IMR-90 (cell line): ENCODE measurements at regions of chr6 and their contacts with region 1.

Region 1: DNA sequence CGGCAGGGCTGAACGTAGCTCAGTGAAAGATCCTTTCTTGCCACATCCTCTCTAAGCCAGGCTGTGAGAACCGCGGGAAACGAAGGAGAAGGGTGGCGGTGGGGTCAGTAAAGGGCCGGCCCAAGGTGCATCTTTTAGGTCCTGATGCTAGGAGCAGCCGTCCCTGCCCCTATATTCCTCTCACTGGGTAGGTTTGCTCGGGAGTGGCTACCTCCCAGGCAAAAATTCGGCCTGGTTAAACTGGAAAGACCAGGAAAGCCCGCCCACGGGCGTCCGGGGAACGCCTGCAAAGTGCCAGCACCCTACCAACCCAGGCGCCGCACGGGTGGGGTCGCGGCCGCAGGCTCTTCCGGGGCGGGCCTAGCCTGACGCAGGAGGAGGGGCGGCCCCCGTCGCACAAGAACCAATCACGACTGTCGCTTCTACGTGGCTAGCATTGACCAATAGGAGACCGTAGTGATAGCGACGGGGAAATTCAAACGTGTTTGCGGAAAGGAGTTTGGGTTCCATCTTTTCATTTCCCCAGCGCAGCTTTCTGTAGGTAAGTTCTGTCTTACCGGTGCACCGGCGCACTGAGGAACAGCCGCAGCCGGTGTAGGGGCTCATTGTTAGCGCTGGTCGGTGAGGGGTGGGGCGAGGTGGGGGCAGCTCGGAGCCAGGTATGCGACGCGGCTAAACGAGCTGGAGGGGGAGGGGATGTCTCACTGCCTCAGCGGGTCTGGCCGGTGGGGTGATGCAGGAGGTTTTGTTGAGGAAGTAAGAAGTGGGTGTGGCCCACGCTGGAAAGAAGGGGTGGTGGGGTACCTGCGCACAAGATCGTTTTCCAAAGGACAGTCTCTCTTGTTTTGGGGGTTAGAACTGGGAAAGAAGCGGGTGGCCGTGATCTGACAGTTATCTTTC is at the start of gene TTK:
- DNase-seq: peak; percentile 93
- ATAC-seq: peak; percentile 100
- H3K4me3 ChIP-seq: peak within 1 kb of the TSS; percentile 69
- H3K27ac ChIP-seq: peak within 1 kb of the TSS; percentile 74
- H3K4me1 ChIP-seq: no peaks in the 10 kb centered on the region
- H3K27me3 ChIP-seq: no peaks in the 10 kb centered on the region
- CTCF ChIP-seq: no peak
- POLR2A ChIP-seq: peak; percentile 56
- RAD21 ChIP-seq: no peak
- total RNA-seq, gene TTK: 21.5 and 35.3 TPM in 2 replicates

Region 2: DNA sequence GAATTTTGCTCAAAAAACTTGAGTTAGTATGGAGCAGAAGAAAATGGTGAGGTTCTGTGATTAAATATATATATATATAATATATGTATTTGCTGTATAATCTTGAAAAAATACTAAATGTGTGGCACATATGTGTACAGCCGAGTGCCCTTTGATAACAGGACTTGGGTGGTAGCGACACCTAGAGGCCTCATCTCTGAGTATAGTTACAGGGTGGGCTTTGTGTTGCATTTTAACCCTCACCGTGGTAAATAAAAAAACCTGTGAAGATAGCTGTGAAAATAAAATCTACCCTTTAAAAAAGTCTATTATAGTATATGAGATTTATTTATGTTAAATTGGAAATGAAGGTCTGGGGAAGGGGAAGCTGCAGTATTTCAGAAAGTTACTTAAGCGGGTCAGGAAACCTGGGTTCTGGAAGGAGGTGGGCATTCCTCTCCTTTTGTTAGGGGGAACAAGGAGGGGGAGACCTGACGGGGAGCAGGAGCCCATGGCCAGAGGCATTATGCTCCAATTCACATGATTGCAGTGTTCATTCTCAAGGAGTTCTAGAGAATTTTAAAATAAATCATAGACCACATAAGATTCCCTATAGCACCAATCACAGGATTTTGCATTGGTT is 290.6 kb before region 1 on chr6:
- CTCF ChIA-PET with region 1: no interaction called
- POLR2A ChIA-PET with region 1: no interaction called
- dilution Hi-C with region 1: no loop called
- in situ Hi-C with region 1: no loop called
- intact Hi-C with region 1: no loop called
- DNase-seq: peak; percentile 50
- ATAC-seq: peak; percentile 81
- H3K4me3 ChIP-seq: no peak overlapping the region
- H3K27ac ChIP-seq: no peak overlapping the region
- H3K4me1 ChIP-seq: no peaks in the 10 kb centered on the region
- H3K27me3 ChIP-seq: no peaks in the 10 kb centered on the region; the same call in 1 of the 2 replicates
- CTCF ChIP-seq: peak; percentile 65
- POLR2A ChIP-seq: no peak
- RAD21 ChIP-seq: peak; percentile 74

Region 3: DNA sequence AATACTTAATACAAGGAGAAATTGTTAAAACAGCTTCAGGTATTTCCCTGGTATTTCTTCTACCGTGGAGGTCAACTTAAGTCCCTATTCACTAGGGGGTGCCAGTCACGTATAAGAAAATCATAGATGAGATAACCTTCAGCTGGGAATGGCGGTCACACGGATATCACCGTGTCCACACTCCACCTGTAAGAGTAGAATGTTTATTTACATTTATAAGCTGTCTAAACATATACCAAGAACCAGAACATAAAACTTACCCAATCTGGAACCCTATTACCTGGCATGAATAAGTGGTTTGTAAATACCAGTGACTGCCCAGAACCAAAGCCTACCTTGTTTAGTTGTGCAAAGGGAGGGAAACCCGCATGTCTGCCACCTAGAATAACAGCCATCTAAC is 55.2 kb before region 1 on chr6:
- CTCF ChIA-PET with region 1: interaction called, 5 read pairs
- POLR2A ChIA-PET with region 1: no interaction called
- dilution Hi-C with region 1: no loop called
- in situ Hi-C with region 1: loop called (anchors 10 kb)
- intact Hi-C with region 1: loop called (anchors 1 kb)
- DNase-seq: peak; percentile 75
- ATAC-seq: no peak
- H3K4me3 ChIP-seq: no peak overlapping the region
- H3K27ac ChIP-seq: no peak overlapping the region
- H3K4me1 ChIP-seq: no peaks in the 10 kb centered on the region; the same call in 1 of the 2 replicates
- H3K27me3 ChIP-seq: no peaks in the 10 kb centered on the region
- CTCF ChIP-seq: peak; percentile 64
- POLR2A ChIP-seq: no peak
- RAD21 ChIP-seq: peak; percentile 56